Calu3 (cell line): ENCODE measurements at regions of chr1 and their contacts with region 1.

Region 1: GRCh38 chr1:85894651-85895050 is 186.4 kb upstream of the ZNHIT6 start:
- DNase-seq: peak; percentile 50
- H3K4me3 Mint-ChIP-seq: no peak overlapping the region
- H3K27ac Mint-ChIP-seq: no peak overlapping the region
- H3K4me1 Mint-ChIP-seq: no peaks in the 10 kb centered on the region
- H3K27me3 Mint-ChIP-seq: no peaks in the 10 kb centered on the region
- CTCF ChIP-seq: peak; percentile 44

Region 2: GRCh38 chr1:86018283-86018923 is 123.8 kb after region 1 on chr1:
- CTCF ChIA-PET with region 1: no interaction called
- intact Hi-C with region 1: loop called (anchors 2 kb)
- DNase-seq: peak; percentile 35
- H3K4me3 Mint-ChIP-seq: no peak overlapping the region
- H3K27ac Mint-ChIP-seq: no peak overlapping the region
- H3K4me1 Mint-ChIP-seq: no peaks in the 10 kb centered on the region
- H3K27me3 Mint-ChIP-seq: no peaks in the 10 kb centered on the region
- CTCF ChIP-seq: peak; percentile 64

Region 3: DNA sequence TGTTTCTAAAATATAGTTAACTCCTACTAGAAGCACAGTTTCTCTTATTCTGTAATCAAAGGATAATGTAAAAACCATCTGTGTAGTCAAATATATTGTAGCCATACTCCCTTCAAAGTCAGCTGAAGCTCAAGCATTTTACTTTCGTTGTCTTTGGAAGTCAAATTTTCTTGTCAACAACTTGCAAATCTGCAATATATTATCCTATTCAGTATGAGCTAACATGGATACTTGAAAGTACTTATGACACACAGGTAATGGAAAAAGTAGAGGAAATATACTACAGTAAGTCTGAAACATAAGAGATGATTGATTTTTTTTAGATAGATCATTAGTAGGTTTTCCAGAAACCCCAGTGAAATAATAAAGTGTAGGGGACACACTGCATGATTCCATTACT is 140.4 kb after region 1 on chr1:
- CTCF ChIA-PET with region 1: no interaction called
- intact Hi-C with region 1: no loop called
- DNase-seq: no peak
- H3K4me3 Mint-ChIP-seq: no peak overlapping the region
- H3K27ac Mint-ChIP-seq: no peak overlapping the region
- H3K4me1 Mint-ChIP-seq: no peaks in the 10 kb centered on the region
- H3K27me3 Mint-ChIP-seq: no peaks in the 10 kb centered on the region
- CTCF ChIP-seq: no peak

Region 4: GRCh38 chr1:86146603-86147002 is 252.0 kb after region 1 on chr1:
- CTCF ChIA-PET with region 1: no interaction called
- intact Hi-C with region 1: loop called (anchors 10 kb)
- DNase-seq: no peak
- H3K4me3 Mint-ChIP-seq: no peak overlapping the region
- H3K27ac Mint-ChIP-seq: no peak overlapping the region
- H3K4me1 Mint-ChIP-seq: no peaks in the 10 kb centered on the region
- H3K27me3 Mint-ChIP-seq: no peaks in the 10 kb centered on the region
- CTCF ChIP-seq: no peak

Region 5: DNA sequence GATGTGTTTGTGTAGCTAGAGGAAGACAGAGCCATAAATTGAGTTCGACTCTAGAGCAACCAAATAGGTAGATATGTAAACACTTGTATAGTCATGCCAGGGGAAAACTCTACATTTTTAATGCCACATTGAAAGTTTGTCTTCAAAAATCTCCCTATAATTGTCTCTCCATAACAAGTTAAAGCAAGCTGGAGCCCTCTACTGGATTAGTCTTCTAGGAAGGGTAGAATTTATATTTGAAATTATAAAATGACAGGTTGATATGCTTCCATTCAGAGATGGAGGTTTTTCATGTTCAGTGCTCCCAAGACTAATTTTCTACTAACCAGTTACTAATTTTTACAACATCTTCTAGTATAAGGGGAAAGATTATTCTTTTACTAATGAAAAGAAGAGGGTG is 275.0 kb after region 1 on chr1:
- CTCF ChIA-PET with region 1: no interaction called
- intact Hi-C with region 1: loop called (anchors 1 kb)
- DNase-seq: no peak
- H3K4me3 Mint-ChIP-seq: no peak overlapping the region
- H3K27ac Mint-ChIP-seq: no peak overlapping the region
- H3K4me1 Mint-ChIP-seq: no peaks in the 10 kb centered on the region
- H3K27me3 Mint-ChIP-seq: peaks cover 26% of the 10 kb centered on the region
- CTCF ChIP-seq: no peak